CD4-positive, alpha-beta memory T cell (primary cell): ENCODE measurements at regions of chr16 and their contacts with region 1.

Region 1: DNA sequence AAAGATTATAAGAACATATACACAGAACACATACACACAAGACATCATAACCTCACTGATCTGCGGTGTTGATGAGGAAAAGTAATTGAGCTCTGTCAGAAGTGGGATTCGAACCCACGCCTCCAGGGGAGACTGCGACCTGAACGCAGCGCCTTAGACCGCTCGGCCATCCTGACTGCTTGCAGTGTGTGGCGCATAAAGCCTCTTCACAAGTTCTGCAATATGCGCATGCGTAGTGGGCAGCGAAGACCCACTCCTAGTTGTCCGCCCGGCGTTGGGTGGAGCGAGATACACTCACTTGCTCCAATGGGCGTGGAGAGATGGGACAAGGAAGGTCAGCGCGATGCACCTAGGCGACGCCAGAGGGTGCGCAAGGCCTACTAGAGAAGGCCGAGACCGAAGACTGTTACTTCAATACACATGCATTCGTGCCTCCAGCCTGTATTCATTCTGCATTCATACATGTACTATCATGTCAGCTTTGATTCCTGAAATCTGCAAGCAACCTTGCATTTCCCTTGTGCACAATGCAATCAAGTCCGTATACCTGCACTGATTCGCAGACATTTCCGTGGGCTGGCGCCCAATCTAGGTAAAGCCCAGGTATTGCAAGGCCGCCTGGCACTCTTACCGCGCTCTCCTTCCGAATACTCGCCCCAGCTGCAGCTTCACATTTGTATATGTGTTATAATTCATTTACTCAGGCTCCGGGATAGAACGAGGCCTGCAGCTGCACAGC is 16.1 kb upstream of the PLLP start:
- DNase-seq: peak; percentile 99 to 100 (median 99)
- H3K4me3 ChIP-seq: peak overlapping the region; percentile 60 to 67
- H3K4me3 Mint-ChIP-seq: no peak overlapping the region
- H3K27ac ChIP-seq: peak overlapping the region; percentile 53
- H3K27ac Mint-ChIP-seq: no peak overlapping the region
- H3K4me1 ChIP-seq: peaks cover 49% of the 10 kb centered on the region
- H3K4me1 Mint-ChIP-seq: peaks cover 12 to 27% (median 17%) of the 10 kb centered on the region in 4 donors
- H3K27me3 ChIP-seq: no peaks in the 10 kb centered on the region
- H3K27me3 Mint-ChIP-seq: no peaks in the 10 kb centered on the region

Region 2: GRCh38 chr16:57084257-57084770 is 216.2 kb before region 1 on chr16:
- CTCF ChIA-PET with region 1: no interaction called
- POLR2A ChIA-PET with region 1: no interaction called
- intact Hi-C with region 1: loop called (anchors 1 kb)
- DNase-seq: peak; percentile 78 to 81 (median 79)
- H3K4me3 ChIP-seq: no peak overlapping the region
- H3K4me3 Mint-ChIP-seq: peak overlapping the region in 1 of 8 donors; percentile 30
- H3K27ac ChIP-seq: peak overlapping the region; percentile 29
- H3K27ac Mint-ChIP-seq: peak overlapping the region; percentile 85 to 95 (median 91)
- H3K4me1 ChIP-seq: peaks cover 10% of the 10 kb centered on the region
- H3K4me1 Mint-ChIP-seq: peaks cover 5 to 18% (median 11%) of the 10 kb centered on the region in 4 donors
- H3K27me3 ChIP-seq: no peaks in the 10 kb centered on the region
- H3K27me3 Mint-ChIP-seq: no peaks in the 10 kb centered on the region

Region 3: DNA sequence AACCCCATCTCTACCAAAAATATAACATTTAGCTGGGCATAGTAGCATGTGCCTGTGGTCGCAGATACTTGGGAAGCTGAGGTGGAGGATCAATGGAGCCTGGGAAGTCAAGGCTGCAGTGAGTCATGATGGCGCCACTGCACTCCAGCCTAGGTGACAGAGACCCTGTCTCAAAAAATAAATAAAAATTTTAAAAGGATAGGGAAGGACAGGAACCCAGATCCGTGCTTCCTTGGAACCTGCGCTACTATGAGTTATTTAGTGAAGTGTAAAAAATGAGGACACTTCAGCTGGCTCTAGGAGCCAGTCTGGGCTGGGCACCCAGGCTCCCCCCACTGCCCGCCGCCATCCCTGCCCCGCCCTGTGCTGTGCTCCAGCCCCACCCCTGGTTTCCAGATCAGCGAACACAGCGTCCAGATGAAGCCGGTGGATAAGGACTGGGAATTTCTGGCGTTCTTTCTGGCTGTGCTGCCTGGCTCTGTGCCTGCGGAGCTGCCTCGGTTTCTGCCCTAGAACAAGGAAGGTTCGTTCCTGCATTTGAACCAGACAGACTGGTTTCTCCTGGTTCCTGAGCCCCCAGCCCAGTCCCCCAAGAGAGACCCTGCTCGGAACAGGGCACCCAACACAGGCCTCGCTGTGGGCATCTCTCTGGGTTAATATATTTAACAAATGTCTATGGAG is 34.6 kb before region 1 on chr16:
- CTCF ChIA-PET with region 1: interaction called, 3 read pairs
- POLR2A ChIA-PET with region 1: interaction called, 17 read pairs
- intact Hi-C with region 1: loop called (anchors 1 kb)
- DNase-seq: no peak
- H3K4me3 ChIP-seq: no peak overlapping the region
- H3K4me3 Mint-ChIP-seq: peak overlapping the region; percentile 0 to 69 (median 24)
- H3K27ac ChIP-seq: peak overlapping the region; percentile 34
- H3K27ac Mint-ChIP-seq: peak overlapping the region; percentile 72 to 95 (median 86)
- H3K4me1 ChIP-seq: peaks cover 44% of the 10 kb centered on the region
- H3K4me1 Mint-ChIP-seq: peaks cover 20 to 42% (median 25%) of the 10 kb centered on the region in 4 donors
- H3K27me3 ChIP-seq: no peaks in the 10 kb centered on the region
- H3K27me3 Mint-ChIP-seq: no peaks in the 10 kb centered on the region

Region 4: DNA sequence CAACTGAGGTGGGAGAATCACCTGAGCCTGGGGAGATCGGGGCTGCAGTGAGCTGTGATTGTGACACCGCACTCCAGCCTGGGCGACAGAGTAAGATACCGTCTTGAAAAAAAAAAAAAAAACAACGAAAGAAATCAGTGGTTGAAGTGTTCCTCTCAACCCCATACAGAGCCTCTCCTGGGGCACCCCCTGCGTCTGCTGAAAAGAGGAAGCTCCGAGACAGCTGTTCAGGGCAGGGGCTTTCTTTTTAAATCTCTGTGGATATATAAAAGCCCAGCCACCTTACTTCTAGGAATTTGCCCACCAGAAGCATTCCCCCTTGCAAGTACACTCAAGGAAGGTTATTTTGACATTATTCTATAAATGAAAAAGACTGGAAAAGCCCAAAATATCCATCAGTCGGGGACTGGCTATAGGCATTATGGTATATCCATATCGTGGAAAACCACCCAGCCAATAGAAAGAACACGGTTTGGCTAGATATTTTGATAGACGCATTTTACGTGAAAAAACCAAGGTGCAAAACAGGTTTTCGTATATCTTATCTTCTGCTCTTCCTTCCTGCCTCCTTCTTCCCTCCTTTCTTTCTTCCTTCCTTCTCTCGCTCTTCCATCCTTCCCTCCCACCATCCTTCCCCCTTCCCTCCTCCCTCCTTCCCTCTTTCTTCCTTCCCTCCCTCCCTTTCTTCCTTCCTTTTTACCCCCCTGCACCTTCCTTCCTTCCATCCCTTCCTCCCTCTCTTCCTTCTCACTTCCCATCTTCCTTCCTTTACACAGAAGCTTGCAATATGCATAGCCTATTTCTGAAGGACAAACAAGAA is 48.9 kb after region 1 on chr16:
- CTCF ChIA-PET with region 1: no interaction called
- POLR2A ChIA-PET with region 1: no interaction called
- intact Hi-C with region 1: no loop called
- DNase-seq: no peak
- H3K4me3 ChIP-seq: no peak overlapping the region
- H3K4me3 Mint-ChIP-seq: peak overlapping the region in 3 of 8 donors; percentile 7 to 50 (median 12)
- H3K27ac ChIP-seq: no peak overlapping the region
- H3K27ac Mint-ChIP-seq: no peak overlapping the region
- H3K4me1 ChIP-seq: peaks cover 7% of the 10 kb centered on the region
- H3K4me1 Mint-ChIP-seq: peaks cover 10 to 15% (median 12%) of the 10 kb centered on the region in 4 donors
- H3K27me3 ChIP-seq: peaks cover 4% of the 10 kb centered on the region
- H3K27me3 Mint-ChIP-seq: peaks cover 35 to 49% of the 10 kb centered on the region in 2 donors

Region 5: DNA sequence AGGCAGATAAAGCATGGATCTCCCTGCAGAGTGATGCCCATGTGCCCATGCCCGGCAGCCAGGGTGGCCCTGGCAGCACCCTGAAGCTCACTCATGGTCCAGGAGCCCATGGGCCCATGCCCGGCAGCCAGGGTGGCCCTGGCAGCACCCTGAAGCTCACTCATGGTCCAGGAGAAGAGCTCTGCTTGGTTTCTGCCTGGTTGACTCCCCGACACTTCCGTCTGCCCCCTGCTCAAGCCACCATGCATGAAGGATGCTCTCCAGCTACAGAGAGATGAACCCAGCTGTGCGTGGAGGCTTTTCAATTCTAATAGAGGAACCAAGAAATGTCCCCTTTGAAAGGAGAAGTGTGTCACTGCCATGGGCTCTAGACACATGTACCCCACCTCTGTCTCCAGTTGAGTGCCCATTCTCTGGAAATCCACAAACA is 112.8 kb after region 1 on chr16:
- CTCF ChIA-PET with region 1: interaction called, 174 read pairs
- POLR2A ChIA-PET with region 1: interaction called, 24 read pairs
- intact Hi-C with region 1: loop called (anchors 1 kb)
- DNase-seq: no peak
- H3K4me3 ChIP-seq: no peak overlapping the region
- H3K4me3 Mint-ChIP-seq: no peak overlapping the region
- H3K27ac ChIP-seq: no peak overlapping the region
- H3K27ac Mint-ChIP-seq: no peak overlapping the region
- H3K4me1 ChIP-seq: peaks cover 7% of the 10 kb centered on the region
- H3K4me1 Mint-ChIP-seq: peaks cover 6 to 13% (median 7%) of the 10 kb centered on the region in 4 donors
- H3K27me3 ChIP-seq: no peaks in the 10 kb centered on the region
- H3K27me3 Mint-ChIP-seq: peaks cover 1 to 6% of the 10 kb centered on the region in 2 donors

Region 6: DNA sequence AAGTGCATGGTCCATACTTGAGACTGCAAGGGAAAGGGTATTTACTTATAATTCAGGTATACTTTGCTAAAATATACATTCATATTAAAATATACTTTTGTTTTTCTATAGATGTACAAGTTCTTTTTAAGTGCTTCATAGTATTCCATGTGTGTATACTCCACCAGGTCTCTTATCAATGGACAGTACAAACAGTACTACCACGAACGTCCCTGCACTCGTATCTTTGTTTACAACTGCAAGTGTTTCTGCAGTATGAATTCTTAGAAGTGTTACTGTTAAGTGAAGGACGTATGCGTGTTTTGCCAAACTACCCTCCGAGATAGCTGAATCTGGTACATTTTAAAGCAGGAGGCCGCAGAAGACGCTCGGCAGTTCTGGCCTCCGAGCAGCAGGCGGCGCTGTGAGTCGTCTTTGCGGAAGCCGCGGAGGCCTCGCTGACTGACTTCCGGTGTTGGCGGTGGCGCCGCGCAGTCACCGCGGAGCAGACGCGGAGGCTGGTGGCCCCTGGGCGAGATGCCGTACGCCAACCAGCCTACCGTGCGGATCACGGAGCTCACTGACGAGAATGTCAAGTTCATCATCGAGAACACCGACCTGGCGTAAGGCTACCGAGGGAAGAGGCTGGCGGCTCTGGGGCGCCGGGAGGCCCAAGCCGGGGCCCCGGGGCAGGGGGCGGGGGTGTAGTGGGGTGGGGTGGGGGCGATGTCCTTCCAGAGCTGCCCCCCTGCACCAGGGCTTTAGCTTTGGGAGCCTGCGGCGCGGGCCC is 161.8 kb after region 1 on chr16 and contains the start of gene POLR2C:
- CTCF ChIA-PET with region 1: interaction called, 4 read pairs
- POLR2A ChIA-PET with region 1: interaction called, 5 read pairs
- intact Hi-C with region 1: loop called (anchors 1 kb)
- DNase-seq: peak; percentile 89 to 93 (median 90)
- H3K4me3 ChIP-seq: peak within 1 kb of the TSS; percentile 81 to 87
- H3K4me3 Mint-ChIP-seq: peak within 1 kb of the TSS; percentile 98 to 100 (median 100)
- H3K27ac ChIP-seq: peak within 1 kb of the TSS; percentile 69
- H3K27ac Mint-ChIP-seq: peak within 1 kb of the TSS; percentile 96 to 100 (median 99)
- H3K4me1 ChIP-seq: peaks cover 36% of the 10 kb centered on the region
- H3K4me1 Mint-ChIP-seq: peaks cover 16 to 43% (median 34%) of the 10 kb centered on the region in 4 donors
- H3K27me3 ChIP-seq: no peaks in the 10 kb centered on the region
- H3K27me3 Mint-ChIP-seq: no peaks in the 10 kb centered on the region
- total RNA-seq, gene POLR2C: 71.4 to 78.1 TPM

Region 7: GRCh38 chr16:57648590-57649442 is 348.3 kb after region 1 on chr16:
- CTCF ChIA-PET with region 1: no interaction called
- POLR2A ChIA-PET with region 1: no interaction called
- intact Hi-C with region 1: loop called (anchors 1 kb)
- DNase-seq: peak; percentile 78 to 85 (median 80)
- H3K4me3 ChIP-seq: no peak overlapping the region
- H3K4me3 Mint-ChIP-seq: peak overlapping the region in 1 of 8 donors; percentile 3
- H3K27ac ChIP-seq: no peak overlapping the region
- H3K27ac Mint-ChIP-seq: peak overlapping the region in 4 of 7 donors; percentile 29 to 79 (median 64)
- H3K4me1 ChIP-seq: peaks cover 26% of the 10 kb centered on the region
- H3K4me1 Mint-ChIP-seq: peaks cover 15 to 32% (median 23%) of the 10 kb centered on the region in 4 donors
- H3K27me3 ChIP-seq: no peaks in the 10 kb centered on the region
- H3K27me3 Mint-ChIP-seq: no peaks in the 10 kb centered on the region